ENCODE measurements at regions of chr7 and their contacts with region 1.

Region 1: GRCh38 chr7:113118074-113118959 is at the start of gene SMIM30:
- DNase-seq: peak; percentile 95
- ATAC-seq: peak; percentile 100
- H3K4me3 Mint-ChIP-seq: peak within 1 kb of the TSS; percentile 87
- H3K27ac Mint-ChIP-seq: peak within 1 kb of the TSS; percentile 93
- H3K4me1 Mint-ChIP-seq: peaks cover 24% of the 10 kb centered on the region
- H3K27me3 Mint-ChIP-seq: no peaks in the 10 kb centered on the region
- CTCF ChIP-seq: no peak
- total RNA-seq, gene SMIM30: 49.3 to 49.8 TPM

Region 2: DNA sequence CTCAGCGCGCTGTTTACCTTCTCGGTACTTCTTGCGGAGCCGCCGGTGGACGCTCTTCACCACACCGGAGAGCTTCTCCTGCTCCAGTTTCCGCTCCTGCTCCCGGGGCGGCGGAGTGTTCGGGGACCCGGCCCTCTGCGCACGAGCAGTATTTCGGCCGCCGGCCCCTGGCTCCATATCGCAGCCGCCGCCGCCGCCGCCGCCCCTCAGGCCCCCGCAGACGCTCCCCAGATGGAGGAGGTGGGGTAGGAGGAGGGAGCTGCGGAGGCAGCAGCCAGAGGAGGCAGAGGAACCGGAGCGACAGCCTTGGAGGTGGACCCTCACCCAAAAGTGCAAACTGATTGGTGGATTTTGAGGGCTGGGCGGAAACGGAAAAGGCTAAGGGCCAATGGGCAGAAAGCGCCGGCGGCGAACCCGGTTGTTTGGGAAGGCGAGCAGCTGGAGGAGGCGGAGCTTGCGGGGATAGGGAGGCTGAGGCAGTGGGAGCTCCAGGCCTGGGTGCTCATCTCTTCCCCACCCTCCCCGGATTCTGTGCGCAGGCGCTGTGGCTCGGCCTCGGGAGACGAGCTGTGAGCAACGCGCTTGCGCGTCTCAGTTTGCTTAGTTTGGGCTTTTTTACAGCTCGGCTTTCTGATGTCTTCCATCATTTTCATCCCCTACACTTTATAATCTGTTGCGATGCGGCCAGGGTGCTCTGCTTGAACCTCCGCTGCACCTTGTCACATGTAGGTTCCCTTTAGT is 178.6 kb before region 1 on chr7:
- CTCF ChIA-PET with region 1: no interaction called
- POLR2A ChIA-PET with region 1: no interaction called
- intact Hi-C with region 1: loop called (anchors 2 kb)
- DNase-seq: peak; percentile 99
- ATAC-seq: peak; percentile 96
- H3K4me3 Mint-ChIP-seq: peak overlapping the region; percentile 82
- H3K27ac Mint-ChIP-seq: peak overlapping the region; percentile 95
- H3K4me1 Mint-ChIP-seq: peaks cover 35% of the 10 kb centered on the region
- H3K27me3 Mint-ChIP-seq: no peaks in the 10 kb centered on the region
- CTCF ChIP-seq: no peak